ENCODE measurements at regions of chr4 and their contacts with region 1.

Region 1: DNA sequence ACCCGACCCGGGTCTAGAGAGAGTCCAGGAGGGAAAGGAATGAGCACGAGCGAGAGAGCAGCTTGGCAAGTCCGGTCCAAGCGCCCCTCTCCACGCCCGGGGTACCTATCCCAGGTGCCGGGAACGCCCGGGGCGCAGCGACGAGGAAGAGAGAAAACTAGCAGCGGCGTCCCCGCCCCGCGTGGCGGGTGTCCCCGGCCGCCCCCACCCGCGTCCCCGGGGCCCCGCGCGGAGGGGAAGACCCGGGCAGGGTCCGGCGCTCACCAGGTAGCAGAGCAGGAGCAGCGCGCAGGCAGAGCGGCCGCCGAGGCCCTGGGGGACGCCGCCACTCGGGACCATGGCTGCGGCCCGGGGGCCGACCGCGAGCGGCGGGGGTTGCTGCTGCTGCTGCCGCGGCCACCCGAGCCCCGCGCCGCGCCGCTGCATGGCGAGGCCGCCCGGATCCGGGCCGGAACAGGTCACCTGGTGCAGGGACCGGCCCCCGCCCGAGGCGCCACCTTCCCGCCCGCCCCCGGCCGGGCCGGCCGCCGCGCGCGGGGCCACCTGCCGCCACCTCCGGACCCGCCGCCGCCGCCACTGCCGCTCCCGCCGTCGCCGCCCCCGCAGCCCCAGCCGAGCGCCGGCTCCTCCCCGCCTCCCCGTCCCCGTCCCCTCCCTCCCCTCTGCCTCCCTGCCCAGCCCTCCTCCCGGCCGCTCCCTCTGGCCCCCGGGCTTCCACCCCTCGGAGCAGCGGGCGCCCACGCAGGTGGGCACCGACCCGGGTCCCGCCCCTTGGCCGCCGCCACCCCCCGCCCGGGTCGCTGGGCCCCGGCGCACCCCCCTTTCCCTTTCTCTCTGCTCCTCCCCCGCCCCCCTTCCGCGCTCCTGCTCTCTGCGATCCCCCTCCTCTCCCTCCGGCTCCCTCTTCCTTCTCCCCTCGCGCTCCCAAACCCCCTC is at the start of gene SEL1L3:
- DNase-seq: peak; percentile 43 to 72 (median 52)
- H3K4me3 ChIP-seq: peak within 1 kb of the TSS; percentile 70
- H3K4me3 Mint-ChIP-seq: peak within 1 kb of the TSS; percentile 94 to 100 (median 99)
- H3K27ac ChIP-seq: peak within 1 kb of the TSS; percentile 80
- H3K27ac Mint-ChIP-seq: peak within 1 kb of the TSS; percentile 83 to 99 (median 97)
- H3K4me1 ChIP-seq: peaks cover 40% of the 10 kb centered on the region
- H3K4me1 Mint-ChIP-seq: peaks cover 43 to 45% (median 44%) of the 10 kb centered on the region in 3 donors
- H3K27me3 ChIP-seq: no peaks in the 10 kb centered on the region
- H3K27me3 Mint-ChIP-seq: no peaks in the 10 kb centered on the region
- total RNA-seq, gene SEL1L3: 36.4 to 46.2 TPM

Region 2: GRCh38 chr4:25580633-25581467 is 281.8 kb before region 1 on chr4:
- CTCF ChIA-PET with region 1: no interaction called
- POLR2A ChIA-PET with region 1: no interaction called
- DNase-seq: no peak
- H3K4me3 ChIP-seq: no peak overlapping the region
- H3K4me3 Mint-ChIP-seq: no peak overlapping the region
- H3K27ac ChIP-seq: no peak overlapping the region
- H3K27ac Mint-ChIP-seq: peak overlapping the region in 1 of 8 donors; percentile 20
- H3K4me1 ChIP-seq: no peaks in the 10 kb centered on the region
- H3K4me1 Mint-ChIP-seq: no peaks in the 10 kb centered on the region
- H3K27me3 ChIP-seq: no peaks in the 10 kb centered on the region
- H3K27me3 Mint-ChIP-seq: peaks cover 6 to 7% of the 10 kb centered on the region in 2 donors

Region 3: DNA sequence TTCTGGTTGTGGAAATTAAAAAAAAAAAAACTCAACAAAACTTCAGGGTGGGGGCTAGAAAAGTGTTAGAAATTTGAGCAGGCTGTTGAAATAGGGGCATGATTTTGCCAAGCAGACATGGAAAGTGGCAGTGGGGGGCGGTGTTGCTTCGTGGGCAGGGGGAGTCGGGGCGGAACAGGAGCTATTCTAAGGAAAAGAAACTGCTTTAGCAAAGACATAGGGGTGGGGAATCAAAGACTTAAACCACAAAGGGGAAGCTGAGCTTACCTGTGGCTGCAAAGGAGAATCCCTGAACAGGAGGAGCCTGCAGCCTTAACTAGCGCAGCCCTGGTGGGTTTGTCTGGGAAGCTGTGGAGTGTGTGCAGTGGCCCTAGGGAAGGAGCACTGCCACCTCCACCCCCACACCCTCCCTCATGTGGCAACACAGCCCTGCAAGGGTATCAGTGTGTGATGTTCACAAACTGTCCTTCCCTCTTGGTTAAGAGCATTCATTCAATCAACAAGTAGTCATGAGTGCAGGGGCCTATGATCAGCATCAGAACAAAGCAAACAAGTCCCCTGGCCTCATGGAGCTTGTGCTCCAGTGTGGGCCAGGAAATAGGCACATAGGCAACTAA is 20.3 kb before region 1 on chr4:
- CTCF ChIA-PET with region 1: interaction called, 17 read pairs
- POLR2A ChIA-PET with region 1: interaction called, 3 read pairs
- DNase-seq: peak in 3 of 5 donors; percentile 25 to 63 (median 56)
- H3K4me3 ChIP-seq: no peak overlapping the region
- H3K4me3 Mint-ChIP-seq: peak overlapping the region in 3 of 7 donors; percentile 8 to 66 (median 56)
- H3K27ac ChIP-seq: no peak overlapping the region
- H3K27ac Mint-ChIP-seq: peak overlapping the region in 5 of 8 donors; percentile 1 to 87 (median 51)
- H3K4me1 ChIP-seq: peaks cover 30% of the 10 kb centered on the region
- H3K4me1 Mint-ChIP-seq: peaks cover 46 to 90% (median 65%) of the 10 kb centered on the region in 3 donors
- H3K27me3 ChIP-seq: no peaks in the 10 kb centered on the region
- H3K27me3 Mint-ChIP-seq: no peaks in the 10 kb centered on the region

Region 4: GRCh38 chr4:25900310-25900709 is 37.6 kb after region 1 on chr4:
- CTCF ChIA-PET with region 1: no interaction called
- POLR2A ChIA-PET with region 1: no interaction called
- DNase-seq: no peak
- H3K4me3 ChIP-seq: no peak overlapping the region
- H3K4me3 Mint-ChIP-seq: no peak overlapping the region
- H3K27ac ChIP-seq: no peak overlapping the region
- H3K27ac Mint-ChIP-seq: no peak overlapping the region
- H3K4me1 ChIP-seq: no peaks in the 10 kb centered on the region
- H3K4me1 Mint-ChIP-seq: no peaks in the 10 kb centered on the region
- H3K27me3 ChIP-seq: no peaks in the 10 kb centered on the region
- H3K27me3 Mint-ChIP-seq: no peaks in the 10 kb centered on the region

Region 5: DNA sequence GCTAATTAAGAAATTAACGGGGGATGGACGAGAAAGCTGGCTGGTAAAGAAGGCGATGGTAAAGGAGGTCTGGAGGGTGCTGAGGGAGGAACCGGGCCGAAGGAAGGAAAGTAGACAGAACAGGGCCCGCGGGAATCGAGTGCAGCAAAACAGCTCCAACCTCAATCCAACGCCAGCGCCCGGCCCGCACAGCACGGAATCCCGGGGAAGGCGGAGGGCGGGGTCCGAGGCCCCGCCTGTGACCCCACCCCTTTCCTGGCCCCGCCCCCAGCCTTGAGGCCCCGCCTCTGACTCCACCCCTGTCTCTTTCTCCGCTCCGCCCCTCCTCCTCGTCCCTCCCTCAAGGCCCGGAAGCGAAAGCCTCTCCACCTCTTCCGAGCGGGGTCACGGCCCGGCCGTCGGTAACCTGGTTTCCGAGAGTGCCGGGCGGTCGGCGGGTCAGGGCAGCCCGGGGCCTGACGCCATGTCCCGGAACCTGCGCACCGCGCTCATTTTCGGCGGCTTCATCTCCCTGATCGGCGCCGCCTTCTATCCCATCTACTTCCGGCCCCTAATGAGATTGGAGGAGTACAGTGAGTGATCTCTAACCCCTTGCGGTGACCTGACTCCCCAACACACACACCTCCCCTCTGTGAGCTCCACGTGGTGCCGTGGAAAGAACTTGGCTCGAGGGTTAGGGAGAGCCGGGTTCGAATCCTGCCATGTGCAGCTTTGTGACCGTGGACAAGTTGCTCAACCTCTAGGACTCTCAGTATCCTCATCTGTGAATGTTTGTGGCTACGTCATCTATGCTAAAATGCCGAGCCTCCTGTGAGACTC is 51.4 kb after region 1 on chr4 and contains the start of gene SMIM20:
- CTCF ChIA-PET with region 1: interaction called, 6 read pairs
- POLR2A ChIA-PET with region 1: interaction called, 22 read pairs
- DNase-seq: peak; percentile 84 to 93 (median 89)
- H3K4me3 ChIP-seq: peak within 1 kb of the TSS; percentile 84
- H3K4me3 Mint-ChIP-seq: peak within 1 kb of the TSS; percentile 93 to 99 (median 97)
- H3K27ac ChIP-seq: peak within 1 kb of the TSS; percentile 92
- H3K27ac Mint-ChIP-seq: peak within 1 kb of the TSS; percentile 93 to 99 (median 97)
- H3K4me1 ChIP-seq: peaks cover 19% of the 10 kb centered on the region
- H3K4me1 Mint-ChIP-seq: peaks cover 18 to 30% (median 21%) of the 10 kb centered on the region in 3 donors
- H3K27me3 ChIP-seq: no peaks in the 10 kb centered on the region
- H3K27me3 Mint-ChIP-seq: no peaks in the 10 kb centered on the region
- total RNA-seq, gene SMIM20: 25.1 to 28.5 TPM

Region 6: GRCh38 chr4:26441102-26441501 is 578.4 kb after region 1 on chr4:
- CTCF ChIA-PET with region 1: no interaction called
- POLR2A ChIA-PET with region 1: interaction called, 10 read pairs
- DNase-seq: no peak
- H3K4me3 ChIP-seq: no peak overlapping the region
- H3K4me3 Mint-ChIP-seq: no peak overlapping the region
- H3K27ac ChIP-seq: no peak overlapping the region
- H3K27ac Mint-ChIP-seq: no peak overlapping the region
- H3K4me1 ChIP-seq: no peaks in the 10 kb centered on the region
- H3K4me1 Mint-ChIP-seq: no peaks in the 10 kb centered on the region
- H3K27me3 ChIP-seq: no peaks in the 10 kb centered on the region
- H3K27me3 Mint-ChIP-seq: peaks cover 0 to 3% of the 10 kb centered on the region in 2 donors

Region 7: GRCh38 chr4:26717332-26717731 is 854.7 kb after region 1 on chr4:
- CTCF ChIA-PET with region 1: no interaction called
- POLR2A ChIA-PET with region 1: no interaction called
- DNase-seq: no peak
- H3K4me3 ChIP-seq: no peak overlapping the region
- H3K4me3 Mint-ChIP-seq: no peak overlapping the region
- H3K27ac ChIP-seq: no peak overlapping the region
- H3K27ac Mint-ChIP-seq: peak overlapping the region in 2 of 8 donors; percentile 20 to 56
- H3K4me1 ChIP-seq: no peaks in the 10 kb centered on the region
- H3K4me1 Mint-ChIP-seq: no peaks in the 10 kb centered on the region
- H3K27me3 ChIP-seq: no peaks in the 10 kb centered on the region
- H3K27me3 Mint-ChIP-seq: no peaks in the 10 kb centered on the region